OCI-LY7 (cell line): ENCODE measurements at regions of chr17 and their contacts with region 1.

Region 1: GRCh38 chr17:47698749-47699535 is 5.0 kb downstream of the TBKBP1 start:
- DNase-seq: peak; percentile 66
- H3K4me3 ChIP-seq: no peak overlapping the region
- H3K27ac ChIP-seq: no peak overlapping the region
- H3K4me1 ChIP-seq: peaks cover 24% of the 10 kb centered on the region
- CTCF ChIP-seq: peak; percentile 97

Region 2: GRCh38 chr17:47649153-47649971 is 49.6 kb before region 1 on chr17 and contains the start of gene KPNB1:
- CTCF ChIA-PET with region 1: no interaction called
- POLR2A ChIA-PET with region 1: interaction called, 15 read pairs
- intact Hi-C with region 1: no loop called
- DNase-seq: peak; percentile 99
- H3K4me3 ChIP-seq: peak within 1 kb of the TSS; percentile 81
- H3K27ac ChIP-seq: peak within 1 kb of the TSS; percentile 92
- H3K4me1 ChIP-seq: peaks cover 44% of the 10 kb centered on the region
- CTCF ChIP-seq: no peak
- total RNA-seq, gene KPNB1: 215 and 232 TPM in 2 replicates

Region 3: GRCh38 chr17:47742319-47743181 is 43.6 kb after region 1 on chr17:
- CTCF ChIA-PET with region 1: no interaction called
- POLR2A ChIA-PET with region 1: no interaction called
- intact Hi-C with region 1: loop called (anchors 1 kb)
- DNase-seq: peak; percentile 61
- H3K4me3 ChIP-seq: no peak overlapping the region
- H3K27ac ChIP-seq: no peak overlapping the region
- H3K4me1 ChIP-seq: peaks cover 3% of the 10 kb centered on the region
- CTCF ChIP-seq: peak; percentile 86

Region 4: DNA sequence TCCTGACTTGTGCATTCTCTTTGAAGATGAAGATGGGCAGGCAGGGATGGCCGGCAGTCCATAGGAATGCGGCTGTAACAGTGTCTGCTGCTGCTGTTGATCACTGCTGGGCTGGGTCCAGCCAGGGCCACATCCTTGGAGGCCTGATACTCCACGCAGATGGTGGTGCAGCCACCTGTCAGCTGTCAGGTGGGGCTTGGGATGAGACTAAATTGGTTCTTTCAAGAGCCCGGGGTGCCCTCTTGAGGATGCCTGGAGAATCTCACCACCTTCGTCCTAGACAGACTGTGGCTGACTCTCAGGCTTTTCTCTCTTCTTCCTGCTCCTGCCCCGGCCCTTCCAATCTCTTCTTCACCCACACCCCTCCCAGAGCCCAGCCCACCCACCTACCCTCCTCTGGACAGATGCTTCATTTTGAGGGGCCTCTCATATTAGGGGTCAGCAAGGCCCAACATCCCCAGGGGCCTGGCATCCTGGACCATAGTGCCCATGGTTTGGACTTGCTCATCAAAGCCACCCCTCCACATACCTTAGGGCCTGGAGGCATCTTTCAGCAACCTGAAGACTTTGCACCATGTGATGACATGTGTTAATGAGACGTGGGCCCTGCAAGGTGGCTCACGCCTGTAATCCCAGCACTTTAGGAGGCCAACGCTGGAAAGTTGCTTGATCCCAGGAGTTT is 103.5 kb after region 1 on chr17:
- CTCF ChIA-PET with region 1: no interaction called
- POLR2A ChIA-PET with region 1: no interaction called
- intact Hi-C with region 1: loop called (anchors 1 kb)
- DNase-seq: peak; percentile 81
- H3K4me3 ChIP-seq: no peak overlapping the region
- H3K27ac ChIP-seq: no peak overlapping the region
- H3K4me1 ChIP-seq: no peaks in the 10 kb centered on the region
- CTCF ChIP-seq: peak; percentile 85

Region 5: DNA sequence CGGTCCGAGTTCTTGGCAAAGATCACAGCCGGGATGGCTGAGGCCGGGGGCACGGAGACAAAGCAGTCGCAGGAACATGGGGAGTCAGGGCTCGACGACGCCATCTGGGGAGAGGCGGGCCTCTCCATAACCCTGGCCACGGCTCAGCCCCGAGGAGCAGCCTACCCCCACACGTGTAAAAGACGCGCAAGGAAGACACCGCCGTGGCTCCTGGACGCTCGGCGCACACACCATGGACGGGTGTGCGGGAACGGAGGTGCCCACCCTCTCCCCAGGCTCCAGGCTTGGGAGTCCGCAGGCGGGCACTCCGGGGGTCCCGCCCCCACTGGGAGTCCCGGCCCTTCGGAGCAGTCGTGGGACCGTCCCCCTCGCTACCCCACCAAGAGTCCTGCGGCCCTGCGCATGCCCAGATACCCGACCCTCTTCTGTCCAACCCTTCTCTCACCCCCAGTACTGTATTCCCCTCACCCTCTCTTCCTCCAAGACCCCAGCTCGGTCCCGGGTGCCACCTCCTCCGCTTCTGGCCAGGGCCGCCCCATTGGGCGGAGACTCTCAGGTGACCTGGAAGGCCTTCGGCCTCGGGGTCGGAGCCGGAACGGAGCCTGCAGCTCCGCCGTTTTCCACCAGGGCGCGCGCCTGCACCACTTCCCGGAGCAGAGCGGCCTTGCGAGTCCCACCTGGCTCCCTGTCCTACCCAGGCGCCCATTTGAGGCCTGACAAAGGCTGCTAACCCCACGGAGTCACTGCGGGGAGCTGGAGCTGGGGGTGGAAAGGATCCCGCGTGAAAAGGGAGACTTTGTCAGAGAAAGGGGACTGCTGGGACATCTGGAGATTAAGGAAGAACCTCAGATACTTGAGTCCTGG is 142.0 kb after region 1 on chr17 and contains the start of gene SCRN2:
- CTCF ChIA-PET with region 1: no interaction called
- POLR2A ChIA-PET with region 1: no interaction called
- intact Hi-C with region 1: no loop called
- DNase-seq: peak; percentile 88
- H3K4me3 ChIP-seq: peak within 1 kb of the TSS; percentile 78
- H3K27ac ChIP-seq: no peak within 1 kb of the TSS
- H3K4me1 ChIP-seq: peaks cover 37% of the 10 kb centered on the region
- CTCF ChIP-seq: peak; percentile 88
- total RNA-seq, gene SCRN2: 33.9 and 42.9 TPM in 2 replicates